ENCODE measurements at regions of chr1 and their contacts with region 1.

Region 1: GRCh38 chr1:209784265-209785169 is at the start of gene C1orf74:
- DNase-seq: peak; percentile 99
- ATAC-seq: peak; percentile 98
- H3K4me3 ChIP-seq: peak within 1 kb of the TSS; percentile 54 to 90 (median 79)
- H3K4me3 Mint-ChIP-seq: peak within 1 kb of the TSS; percentile 92
- H3K27ac ChIP-seq: peak within 1 kb of the TSS; percentile 86 to 90
- H3K27ac Mint-ChIP-seq: peak within 1 kb of the TSS; percentile 95
- H3K4me1 ChIP-seq: peaks cover 14 to 20% of the 10 kb centered on the region in 2 donors
- H3K4me1 Mint-ChIP-seq: peaks cover 25% of the 10 kb centered on the region
- H3K27me3 ChIP-seq: peaks cover 0 to 12% (median 1%) of the 10 kb centered on the region in 4 experiments
- H3K27me3 Mint-ChIP-seq: peaks cover 4% of the 10 kb centered on the region
- CTCF ChIP-seq: no peak
- total RNA-seq, gene C1orf74: 3.4 and 4.1 TPM in 2 replicates

Region 2: GRCh38 chr1:209045326-209046057 is 739.0 kb before region 1 on chr1:
- CTCF ChIA-PET with region 1: no interaction called
- POLR2A ChIA-PET with region 1: no interaction called
- intact Hi-C with region 1: no loop called
- DNase-seq: no peak
- ATAC-seq: no peak
- H3K4me3 ChIP-seq: no peak overlapping the region
- H3K4me3 Mint-ChIP-seq: no peak overlapping the region
- H3K27ac ChIP-seq: no peak overlapping the region
- H3K27ac Mint-ChIP-seq: no peak overlapping the region
- H3K4me1 ChIP-seq: no peaks in the 10 kb centered on the region
- H3K4me1 Mint-ChIP-seq: no peaks in the 10 kb centered on the region
- H3K27me3 ChIP-seq: no peaks in the 10 kb centered on the region
- H3K27me3 Mint-ChIP-seq: peaks cover 4% of the 10 kb centered on the region
- CTCF ChIP-seq: no peak

Region 3: DNA sequence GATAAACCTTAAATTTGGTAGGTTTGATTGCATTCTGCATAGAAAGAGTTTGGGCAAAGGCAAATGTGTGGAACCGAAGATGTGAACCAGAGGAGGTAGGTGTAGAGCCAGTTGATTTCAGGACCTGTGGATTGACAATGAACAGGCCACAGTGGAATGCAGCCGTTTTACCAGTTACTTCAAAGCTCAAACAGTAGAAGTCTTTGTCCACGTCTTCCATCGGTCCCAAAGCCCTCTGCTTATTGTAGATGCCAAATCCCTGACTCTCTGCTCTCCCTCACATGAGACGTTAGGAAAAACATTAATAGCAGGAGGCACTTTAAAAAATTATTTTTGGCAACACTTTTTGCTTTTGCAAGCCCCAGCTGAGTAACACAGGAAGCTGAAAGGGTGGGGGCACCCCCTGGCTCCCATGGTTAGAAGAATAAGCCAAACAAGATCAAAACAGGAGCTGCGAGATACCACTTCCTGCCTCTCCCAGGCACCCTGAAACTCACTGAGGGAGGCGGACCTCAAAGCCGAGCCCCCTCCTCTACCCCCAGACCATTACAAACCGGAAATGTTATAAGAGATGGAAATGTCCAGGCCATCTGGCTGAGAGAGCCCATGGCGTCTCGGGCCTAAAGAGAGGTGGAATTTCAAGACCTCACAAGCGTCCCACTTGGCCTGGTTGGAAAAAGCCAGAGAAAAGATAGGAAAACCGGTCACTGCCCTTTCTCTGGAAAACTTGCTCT is 15.2 kb before region 1 on chr1:
- CTCF ChIA-PET with region 1: interaction called, 20 read pairs
- POLR2A ChIA-PET with region 1: interaction called, 12 read pairs
- intact Hi-C with region 1: loop called (anchors 1 kb)
- DNase-seq: peak; percentile 47
- ATAC-seq: peak; percentile 57
- H3K4me3 ChIP-seq: peak overlapping the region; percentile 58 to 83 (median 68)
- H3K4me3 Mint-ChIP-seq: no peak overlapping the region
- H3K27ac ChIP-seq: peak overlapping the region; percentile 57 to 87
- H3K27ac Mint-ChIP-seq: no peak overlapping the region
- H3K4me1 ChIP-seq: peaks cover 65 to 80% of the 10 kb centered on the region in 2 donors
- H3K4me1 Mint-ChIP-seq: peaks cover 29% of the 10 kb centered on the region
- H3K27me3 ChIP-seq: no peaks in the 10 kb centered on the region
- H3K27me3 Mint-ChIP-seq: no peaks in the 10 kb centered on the region
- CTCF ChIP-seq: no peak

Region 4: DNA sequence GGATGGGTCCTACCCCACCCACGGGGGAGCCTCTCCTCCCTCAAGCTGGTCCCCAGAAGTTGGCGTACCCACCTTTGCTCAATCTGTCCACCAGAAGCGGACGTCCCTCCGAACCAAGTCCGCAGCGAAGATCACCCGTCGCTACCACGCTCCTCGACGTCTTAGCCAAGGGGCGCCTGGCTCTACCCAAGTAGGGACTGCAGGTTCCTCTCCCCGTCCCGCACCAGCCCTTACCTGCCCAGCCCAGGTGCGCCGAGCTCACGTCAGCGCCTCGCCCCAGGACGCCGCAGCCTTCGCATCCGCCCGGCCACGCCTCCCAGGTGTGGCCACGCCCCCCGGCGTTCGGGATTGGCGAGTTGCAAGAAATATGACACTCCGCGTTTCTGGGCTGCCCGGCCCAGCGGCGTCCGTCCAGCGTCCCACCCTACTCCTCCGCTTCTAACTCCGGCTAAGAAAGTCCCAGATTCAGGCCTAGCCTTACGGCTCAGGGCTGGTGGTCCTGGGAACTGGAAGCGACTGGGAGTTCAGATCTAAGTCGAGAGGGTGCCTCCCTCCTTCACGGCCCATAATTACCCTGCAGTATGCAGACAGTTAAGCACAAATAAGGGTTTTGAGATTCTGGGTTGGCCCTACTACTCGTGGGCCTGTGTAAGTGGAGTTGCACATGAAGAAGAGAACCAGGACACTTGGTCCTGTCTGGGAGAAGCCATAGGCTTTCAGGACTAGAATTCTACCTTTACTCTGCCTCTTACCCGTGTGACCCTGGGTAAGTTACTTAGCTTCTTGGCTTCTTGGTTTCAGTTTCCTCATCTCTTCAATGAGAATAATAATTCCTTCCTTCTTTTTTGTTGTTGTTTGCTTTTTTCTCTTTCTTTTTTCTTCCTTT is 21.6 kb after region 1 on chr1 and contains the start of gene IRF6:
- CTCF ChIA-PET with region 1: no interaction called
- POLR2A ChIA-PET with region 1: interaction called, 3 read pairs
- intact Hi-C with region 1: loop called (anchors 1 kb)
- DNase-seq: peak; percentile 74
- ATAC-seq: peak; percentile 95
- H3K4me3 ChIP-seq: peak within 1 kb of the TSS; percentile 43 to 69 (median 57)
- H3K4me3 Mint-ChIP-seq: peak within 1 kb of the TSS; percentile 96
- H3K27ac ChIP-seq: no peak within 1 kb of the TSS
- H3K27ac Mint-ChIP-seq: peak within 1 kb of the TSS; percentile 91
- H3K4me1 ChIP-seq: peaks cover 10 to 13% of the 10 kb centered on the region in 2 donors
- H3K4me1 Mint-ChIP-seq: peaks cover 11% of the 10 kb centered on the region
- H3K27me3 ChIP-seq: peaks cover 0 to 18% (median 9%) of the 10 kb centered on the region in 4 experiments
- H3K27me3 Mint-ChIP-seq: peaks cover 11% of the 10 kb centered on the region
- CTCF ChIP-seq: no peak
- total RNA-seq, gene IRF6: 0.95 and 1.1 TPM in 2 replicates